ENCODE measurements at regions of chr6 and their contacts with region 1.

Region 1: GRCh38 chr6:84618046-84618752 is 146.2 kb downstream of the TBX18 start:
- DNase-seq: no peak
- ATAC-seq: peak; percentile 81
- H3K4me3 ChIP-seq: peak overlapping the region in 1 of 2 donors; percentile 33
- H3K27ac ChIP-seq: peak overlapping the region; percentile 93 to 99
- H3K4me1 ChIP-seq: peaks cover 0 to 2% of the 10 kb centered on the region in 2 donors
- H3K27me3 ChIP-seq: no peaks in the 10 kb centered on the region

Region 2: GRCh38 chr6:84492241-84493165 is 125.7 kb before region 1 on chr6:
- intact Hi-C with region 1: no loop called
- DNase-seq: no peak
- ATAC-seq: peak; percentile 52
- H3K4me3 ChIP-seq: no peak overlapping the region
- H3K27ac ChIP-seq: peak overlapping the region; percentile 25 to 51
- H3K4me1 ChIP-seq: peaks cover 0 to 4% of the 10 kb centered on the region in 2 donors
- H3K27me3 ChIP-seq: no peaks in the 10 kb centered on the region

Region 3: DNA sequence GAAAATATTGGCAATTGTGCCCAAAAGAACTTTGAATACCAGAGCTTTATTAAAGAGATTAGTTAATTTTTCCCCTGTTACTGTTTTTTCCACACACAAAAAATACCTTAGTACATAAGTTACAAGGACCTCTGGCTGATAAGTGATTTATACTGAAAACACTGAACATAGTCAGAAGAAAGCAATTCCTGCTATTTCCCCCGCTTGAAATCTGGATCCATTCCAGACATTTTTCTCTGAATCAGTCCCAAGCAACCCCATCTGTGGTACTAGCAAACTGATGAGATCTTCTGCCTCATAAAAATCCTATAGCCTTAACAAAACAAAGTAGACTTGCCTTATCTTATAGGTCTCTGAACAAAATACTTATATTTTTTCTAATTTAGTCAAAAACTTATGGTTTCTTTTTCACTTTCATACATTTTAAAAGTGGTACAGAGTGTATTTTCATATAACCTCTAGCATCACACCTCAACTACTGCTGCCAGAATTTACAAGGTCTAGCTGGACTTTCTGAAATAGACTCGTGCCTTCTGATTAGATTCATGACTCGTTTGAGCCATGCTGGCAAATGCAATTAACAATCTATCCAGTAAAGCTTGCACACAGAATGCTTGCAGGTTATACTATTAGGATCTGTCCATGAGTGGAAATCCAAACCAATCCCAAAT is 34.3 kb after region 1 on chr6:
- intact Hi-C with region 1: loop called in 1 of 2 experiments (anchors 5 kb)
- DNase-seq: no peak
- ATAC-seq: no peak
- H3K4me3 ChIP-seq: no peak overlapping the region
- H3K27ac ChIP-seq: peak overlapping the region in 1 of 2 donors; percentile 51
- H3K4me1 ChIP-seq: peaks cover 4 to 10% of the 10 kb centered on the region in 2 donors
- H3K27me3 ChIP-seq: no peaks in the 10 kb centered on the region

Measured in aorta (tissue), 5 donors.